Spleen (tissue), 13 donors: ENCODE measurements at regions of chr10 and their contacts with region 1.

Region 1: DNA sequence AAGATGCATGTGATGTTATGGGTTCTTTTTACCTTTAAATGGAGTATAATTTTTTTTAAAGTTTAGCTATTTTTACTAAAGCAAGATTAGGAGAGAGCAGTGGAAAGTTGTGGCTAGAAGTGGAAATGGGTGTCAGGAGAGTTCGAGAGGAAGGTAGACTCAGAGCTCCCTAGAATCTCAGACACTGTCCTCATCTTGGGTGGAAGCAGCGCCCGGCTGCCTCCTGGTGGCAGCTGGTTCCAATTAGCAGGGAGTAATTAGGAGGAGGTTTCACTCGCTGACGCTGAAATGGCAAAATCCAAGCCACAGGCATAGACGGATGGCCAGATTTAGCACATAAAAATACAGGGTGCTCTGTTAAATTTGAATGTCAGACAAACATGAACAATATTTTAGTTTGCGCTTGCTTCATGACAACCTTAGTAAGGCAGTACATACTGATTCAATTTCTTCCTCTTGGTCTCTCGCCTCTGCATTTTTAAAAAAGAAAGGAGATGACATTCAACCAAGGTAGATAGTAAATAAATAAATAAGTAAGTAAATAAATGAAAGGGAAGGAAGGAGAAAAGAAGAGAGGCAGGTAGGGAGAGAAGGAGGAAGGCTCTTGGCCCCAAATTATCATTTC is 58.5 kb downstream of the LGI1 start:
- DNase-seq: peak; percentile 81
- H3K4me3 ChIP-seq: no peak overlapping the region
- H3K27ac ChIP-seq: no peak overlapping the region
- H3K4me1 ChIP-seq: peaks cover 0 to 10% (median 0%) of the 10 kb centered on the region in 6 donors
- H3K27me3 ChIP-seq: peaks cover 0 to 37% (median 0%) of the 10 kb centered on the region in 7 donors
- CTCF ChIP-seq: peak in 10 of 11 experiments; percentile 30 to 65 (median 58)
- POLR2A ChIP-seq: no peak

Region 2: GRCh38 chr10:93702211-93703001 is 113.8 kb before region 1 on chr10 and contains the start of gene FRA10AC1:
- intact Hi-C with region 1: loop called (anchors 5 kb)
- DNase-seq: peak; percentile 96
- H3K4me3 ChIP-seq: peak within 1 kb of the TSS; percentile 49 to 74 (median 64)
- H3K27ac ChIP-seq: peak within 1 kb of the TSS; percentile 70 to 89 (median 85)
- H3K4me1 ChIP-seq: peaks cover 14 to 55% (median 35%) of the 10 kb centered on the region in 6 donors
- H3K27me3 ChIP-seq: no peaks in the 10 kb centered on the region
- CTCF ChIP-seq: peak; percentile 20 to 75 (median 49)
- POLR2A ChIP-seq: peak; percentile 37 to 89 (median 43)
- total RNA-seq, gene FRA10AC1: 13.0 to 99.5 (median 20.4) TPM

Region 3: DNA sequence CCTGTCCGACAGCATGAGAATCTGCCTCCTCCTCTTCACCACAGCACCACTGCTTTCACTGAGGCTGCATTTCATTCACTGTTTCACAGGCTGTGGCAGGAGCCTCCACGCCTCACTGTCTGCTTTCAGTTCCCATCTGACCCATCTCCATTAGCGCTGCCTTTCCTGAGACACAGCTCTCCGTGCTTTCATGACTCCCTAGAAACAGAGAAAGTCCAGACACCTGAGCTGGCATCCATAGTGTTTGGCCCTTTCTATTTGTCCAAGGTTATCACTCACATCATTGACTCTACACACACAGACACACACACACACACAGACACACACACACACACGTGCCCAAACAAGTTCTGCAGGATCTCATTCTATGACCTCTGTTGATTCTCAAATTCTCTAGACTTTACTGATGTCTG is 53.2 kb before region 1 on chr10:
- intact Hi-C with region 1: no loop called
- DNase-seq: no peak
- H3K4me3 ChIP-seq: no peak overlapping the region
- H3K27ac ChIP-seq: no peak overlapping the region
- H3K4me1 ChIP-seq: peaks cover 0 to 6% (median 1%) of the 10 kb centered on the region in 6 donors
- H3K27me3 ChIP-seq: peaks cover 0 to 46% (median 7%) of the 10 kb centered on the region in 7 donors
- CTCF ChIP-seq: no peak
- POLR2A ChIP-seq: no peak